ENCODE measurements at regions of chr15 and their contacts with region 1.

Region 1: DNA sequence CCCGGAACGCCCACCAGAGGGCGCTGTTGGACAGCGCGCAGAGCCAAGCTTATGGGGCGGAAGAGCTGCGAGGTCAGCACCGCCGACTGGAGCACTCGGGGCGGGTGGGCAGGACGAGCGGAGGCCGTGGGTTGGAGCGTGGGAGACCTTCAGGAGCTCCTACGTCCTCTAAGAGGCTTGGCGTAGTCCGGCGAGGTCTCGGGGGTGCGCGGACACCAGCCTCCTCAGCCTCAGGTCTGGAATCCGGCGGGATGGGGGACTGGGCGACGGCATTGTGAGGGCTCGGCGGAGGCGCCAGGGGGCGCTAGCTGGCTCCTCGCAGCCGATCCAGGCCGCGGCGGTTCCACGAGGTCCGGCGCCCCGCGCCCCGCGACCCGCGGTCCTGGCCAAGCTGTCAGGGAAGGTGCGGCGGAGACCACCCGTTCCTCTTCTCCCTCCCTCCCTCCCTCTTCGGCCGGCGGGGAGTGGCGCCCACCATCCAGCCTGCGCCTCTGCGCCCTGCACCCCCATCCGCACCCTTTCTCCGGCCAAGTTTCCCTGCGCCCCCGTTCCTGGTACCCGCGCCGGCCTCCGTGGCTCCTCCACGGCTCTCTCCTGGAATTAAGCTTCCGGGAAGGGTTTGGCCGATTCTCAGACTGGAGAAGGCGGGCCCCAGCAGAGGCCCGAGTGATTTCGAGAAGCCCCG is 24.3 kb upstream of the POLG start:
- DNase-seq: peak; percentile 85
- ATAC-seq: peak; percentile 93
- H3K4me3 Mint-ChIP-seq: peak overlapping the region; percentile 75
- H3K27ac Mint-ChIP-seq: no peak overlapping the region
- H3K4me1 Mint-ChIP-seq: peaks cover 3% of the 10 kb centered on the region
- H3K27me3 Mint-ChIP-seq: peaks cover 75% of the 10 kb centered on the region
- CTCF ChIP-seq: peak; percentile 97

Region 2: DNA sequence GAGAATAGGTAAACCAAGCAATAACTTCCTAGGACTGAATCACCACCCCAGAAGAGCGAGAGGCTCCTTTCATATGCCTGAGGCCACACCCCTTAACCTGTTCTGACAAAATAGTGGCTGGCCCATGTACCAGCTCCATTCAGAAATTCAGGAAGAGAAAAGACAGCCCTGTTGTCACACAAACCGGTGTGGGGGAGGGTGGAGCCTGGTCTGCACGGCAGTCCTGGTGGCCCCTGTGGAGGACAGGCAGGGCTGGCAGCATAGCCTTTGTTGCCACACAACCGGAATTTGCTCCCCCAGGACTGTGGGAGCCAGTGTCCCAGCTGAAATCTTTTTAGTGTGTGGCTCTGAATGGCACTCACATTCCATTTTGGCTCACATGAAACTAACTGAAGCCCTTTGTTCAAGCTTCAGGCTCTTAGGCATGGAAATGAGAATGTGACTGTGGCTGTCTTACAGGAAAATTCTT is 161.4 kb before region 1 on chr15:
- CTCF ChIA-PET with region 1: no interaction called
- POLR2A ChIA-PET with region 1: no interaction called
- intact Hi-C with region 1: no loop called
- DNase-seq: peak; percentile 30
- ATAC-seq: peak; percentile 90
- H3K4me3 Mint-ChIP-seq: no peak overlapping the region
- H3K27ac Mint-ChIP-seq: peak overlapping the region; percentile 80
- H3K4me1 Mint-ChIP-seq: peaks cover 11% of the 10 kb centered on the region
- H3K27me3 Mint-ChIP-seq: no peaks in the 10 kb centered on the region
- CTCF ChIP-seq: no peak

Region 3: GRCh38 chr15:89341316-89342005 is 17.4 kb before region 1 on chr15:
- CTCF ChIA-PET with region 1: interaction called, 116 read pairs
- POLR2A ChIA-PET with region 1: no interaction called
- intact Hi-C with region 1: no loop called
- DNase-seq: no peak
- ATAC-seq: no peak
- H3K4me3 Mint-ChIP-seq: no peak overlapping the region
- H3K27ac Mint-ChIP-seq: no peak overlapping the region
- H3K4me1 Mint-ChIP-seq: peaks cover 13% of the 10 kb centered on the region
- H3K27me3 Mint-ChIP-seq: peaks cover 3% of the 10 kb centered on the region
- CTCF ChIP-seq: no peak

Region 4: DNA sequence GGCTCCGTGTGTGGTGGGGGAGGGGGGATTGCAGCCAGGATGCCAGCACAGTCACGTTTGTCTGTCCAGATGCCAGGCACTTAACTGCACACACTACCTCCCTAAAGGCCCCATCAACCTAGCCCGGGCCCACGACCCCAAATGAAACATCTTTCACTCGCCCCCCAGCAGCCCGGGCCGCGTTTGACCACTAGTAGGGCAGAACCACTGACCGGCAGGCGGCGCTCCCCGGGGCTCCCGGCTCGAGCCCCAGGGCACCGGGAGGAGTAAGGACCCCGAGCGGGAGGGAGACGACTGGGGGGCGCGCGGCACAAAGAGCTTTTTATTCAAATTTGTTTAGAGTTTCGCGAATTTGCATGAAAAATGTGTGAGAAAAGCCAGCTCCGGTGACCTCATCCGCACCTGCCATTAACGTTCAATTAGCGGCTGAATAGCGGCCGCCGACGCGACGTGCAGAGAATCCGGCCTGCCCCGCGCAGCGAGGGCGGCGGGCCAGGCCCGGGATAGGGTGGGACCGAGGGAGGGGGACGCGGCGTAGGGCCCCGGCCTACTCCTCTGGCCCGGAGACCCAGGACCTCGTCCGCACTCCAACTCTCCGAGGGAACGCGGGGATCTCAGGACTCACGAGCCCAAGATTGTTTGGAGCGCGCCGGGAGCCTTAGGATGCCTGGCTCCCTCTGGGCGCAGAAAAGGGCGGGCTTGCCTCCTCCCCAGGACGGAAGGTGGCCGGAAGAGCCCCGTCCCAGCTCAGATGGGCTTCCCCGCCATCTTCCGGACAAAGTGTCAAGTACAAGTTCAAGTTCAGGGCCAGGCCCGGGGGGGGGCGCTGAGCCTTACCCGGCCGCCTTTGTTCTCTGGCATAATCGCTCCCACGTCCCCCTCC is 40.6 kb after region 1 on chr15:
- CTCF ChIA-PET with region 1: interaction called, 71 read pairs
- POLR2A ChIA-PET with region 1: interaction called, 3 read pairs
- intact Hi-C with region 1: no loop called
- DNase-seq: peak; percentile 61
- ATAC-seq: peak; percentile 86
- H3K4me3 Mint-ChIP-seq: peak overlapping the region; percentile 69
- H3K27ac Mint-ChIP-seq: no peak overlapping the region
- H3K4me1 Mint-ChIP-seq: peaks cover 10% of the 10 kb centered on the region
- H3K27me3 Mint-ChIP-seq: peaks cover 62% of the 10 kb centered on the region
- CTCF ChIP-seq: peak; percentile 52

Region 5: DNA sequence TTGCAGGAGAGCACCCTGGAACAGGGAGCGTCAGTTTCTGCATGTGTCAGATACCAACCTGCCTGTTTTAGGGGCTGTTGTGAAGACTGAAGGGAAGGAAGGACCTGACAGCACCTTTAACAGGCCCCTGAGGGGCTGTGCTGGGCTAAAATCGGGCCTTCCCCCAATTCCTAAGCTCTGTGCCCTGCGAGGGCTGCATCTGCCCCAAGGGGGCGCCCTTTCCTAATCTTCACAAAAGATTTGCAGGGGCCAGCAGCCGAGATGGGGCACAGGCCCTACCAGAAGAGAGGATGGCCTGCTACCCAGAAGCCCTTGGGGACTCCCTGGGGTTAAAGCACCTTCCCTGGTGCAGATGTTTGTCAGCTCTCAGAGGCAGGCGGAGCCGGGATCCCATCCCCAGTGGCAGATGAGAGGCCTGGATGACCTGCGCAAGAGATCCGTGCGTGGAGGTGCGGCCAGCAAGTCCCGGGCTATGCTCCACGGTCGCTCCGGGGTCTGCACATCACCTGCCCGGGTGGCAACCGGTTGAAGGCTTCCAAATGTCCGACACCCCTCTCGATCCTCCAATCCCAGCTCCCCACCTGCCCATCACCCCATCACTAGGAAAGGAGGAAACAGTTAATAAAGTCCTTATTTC is 83.9 kb after region 1 on chr15:
- CTCF ChIA-PET with region 1: interaction called, 41 read pairs
- POLR2A ChIA-PET with region 1: no interaction called
- intact Hi-C with region 1: no loop called
- DNase-seq: peak; percentile 81
- ATAC-seq: peak; percentile 92
- H3K4me3 Mint-ChIP-seq: no peak overlapping the region
- H3K27ac Mint-ChIP-seq: no peak overlapping the region
- H3K4me1 Mint-ChIP-seq: no peaks in the 10 kb centered on the region
- H3K27me3 Mint-ChIP-seq: peaks cover 33% of the 10 kb centered on the region
- CTCF ChIP-seq: peak; percentile 85

Region 6: DNA sequence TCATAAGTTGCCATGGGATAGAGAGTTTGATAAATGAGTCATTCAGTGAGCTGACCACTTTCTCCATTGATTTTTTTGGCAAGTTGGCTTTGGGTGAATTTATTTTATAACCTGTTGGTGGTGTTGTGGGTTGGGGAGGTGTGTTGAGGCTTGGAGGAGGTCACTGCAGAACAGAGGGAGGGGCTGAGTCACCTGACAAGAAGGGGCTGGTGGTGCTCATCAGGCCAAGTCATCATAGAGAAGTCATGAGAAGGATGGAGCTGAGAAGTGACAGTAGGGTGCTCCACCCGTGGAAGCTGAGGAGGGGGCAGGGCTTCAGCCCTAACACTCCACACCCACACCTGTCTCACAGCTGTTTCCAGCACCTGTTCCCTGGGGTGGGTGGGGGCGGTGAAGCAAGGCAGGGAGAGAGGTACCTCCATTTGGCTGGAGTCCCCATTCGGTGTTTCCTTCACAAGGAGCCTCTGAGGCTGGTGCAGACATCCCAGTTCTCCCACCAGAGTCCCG is 127.0 kb after region 1 on chr15:
- CTCF ChIA-PET with region 1: interaction called, 11 read pairs
- POLR2A ChIA-PET with region 1: no interaction called
- intact Hi-C with region 1: no loop called
- DNase-seq: no peak
- ATAC-seq: peak; percentile 30
- H3K4me3 Mint-ChIP-seq: no peak overlapping the region
- H3K27ac Mint-ChIP-seq: no peak overlapping the region
- H3K4me1 Mint-ChIP-seq: peaks cover 8% of the 10 kb centered on the region
- H3K27me3 Mint-ChIP-seq: peaks cover 27% of the 10 kb centered on the region
- CTCF ChIP-seq: no peak